Uterus (tissue), 4 donors: ENCODE measurements at regions of chr1 and their contacts with region 1.

Region 1: DNA sequence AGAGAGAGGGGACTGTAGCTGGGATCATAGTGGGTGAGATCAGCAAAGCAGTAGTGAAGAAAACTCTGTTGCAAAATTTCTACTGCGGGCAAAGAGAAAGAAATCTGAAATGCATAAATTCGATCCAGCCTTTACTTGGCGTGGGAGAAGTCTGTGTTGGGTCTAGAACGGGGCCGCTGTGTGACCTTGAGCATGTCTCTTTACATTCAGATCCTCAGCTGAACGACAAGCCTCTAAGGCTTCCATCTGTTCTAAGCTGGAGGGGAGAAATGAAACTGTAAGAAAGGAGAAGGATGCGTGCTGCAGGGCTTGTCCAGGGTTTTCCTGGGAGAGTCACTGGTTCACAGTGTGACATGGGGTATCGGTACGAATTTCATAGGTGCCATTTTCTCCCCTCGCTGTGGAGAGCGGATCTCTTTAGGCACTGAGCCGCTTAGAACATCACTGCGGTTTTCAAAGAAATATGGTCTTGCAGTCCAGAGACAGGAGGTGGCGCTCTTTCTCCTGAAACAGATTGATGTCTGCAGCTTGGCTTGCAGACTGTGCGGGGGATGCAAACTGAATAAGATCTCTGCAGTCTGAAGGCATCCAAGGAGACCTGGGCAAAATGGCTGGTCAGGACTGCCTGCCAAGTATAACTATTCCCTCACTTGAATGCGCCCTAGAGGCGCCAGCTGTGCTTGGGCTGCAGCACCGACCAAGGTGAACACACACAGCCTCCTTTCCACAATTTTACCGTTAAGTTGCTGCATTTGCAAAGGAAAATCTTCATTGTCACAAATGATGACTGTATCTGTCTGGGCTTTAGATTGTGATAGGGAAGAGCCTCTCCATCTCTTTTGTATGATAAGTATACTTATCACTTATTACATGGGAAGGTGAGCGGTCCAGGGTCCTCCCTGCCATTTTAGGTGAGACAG is 104.1 kb downstream of the XCL2 start:
- DNase-seq: peak; percentile 72 to 84
- H3K4me3 ChIP-seq: no peak overlapping the region
- H3K27ac ChIP-seq: peak overlapping the region; percentile 11 to 18
- H3K4me1 ChIP-seq: no peaks in the 10 kb centered on the region
- H3K27me3 ChIP-seq: no peaks in the 10 kb centered on the region
- CTCF ChIP-seq: peak; percentile 66 to 75 (median 70)
- POLR2A ChIP-seq: no peak

Region 2: GRCh38 chr1:168386949-168387586 is 52.6 kb before region 1 on chr1:
- intact Hi-C with region 1: no loop called
- DNase-seq: peak; percentile 72 to 77
- H3K4me3 ChIP-seq: no peak overlapping the region
- H3K27ac ChIP-seq: no peak overlapping the region
- H3K4me1 ChIP-seq: peaks cover 0 to 3% of the 10 kb centered on the region in 2 donors
- H3K27me3 ChIP-seq: no peaks in the 10 kb centered on the region
- CTCF ChIP-seq: peak in 1 of 4 experiments; percentile 19
- POLR2A ChIP-seq: no peak

Region 3: GRCh38 chr1:168509875-168510791 is 70.4 kb after region 1 on chr1:
- intact Hi-C with region 1: no loop called
- DNase-seq: no peak
- H3K4me3 ChIP-seq: no peak overlapping the region
- H3K27ac ChIP-seq: no peak overlapping the region
- H3K4me1 ChIP-seq: no peaks in the 10 kb centered on the region
- H3K27me3 ChIP-seq: no peaks in the 10 kb centered on the region
- CTCF ChIP-seq: no peak
- POLR2A ChIP-seq: no peak

Region 4: GRCh38 chr1:168572633-168573032 is 132.9 kb after region 1 on chr1:
- intact Hi-C with region 1: loop called (anchors 10 kb)
- DNase-seq: no peak
- H3K4me3 ChIP-seq: no peak overlapping the region
- H3K27ac ChIP-seq: no peak overlapping the region
- H3K4me1 ChIP-seq: no peaks in the 10 kb centered on the region
- H3K27me3 ChIP-seq: no peaks in the 10 kb centered on the region
- CTCF ChIP-seq: no peak
- POLR2A ChIP-seq: no peak